Heart right ventricle (tissue), 16 donors: ENCODE measurements at regions of chr16 and their contacts with region 1.

Region 1: DNA sequence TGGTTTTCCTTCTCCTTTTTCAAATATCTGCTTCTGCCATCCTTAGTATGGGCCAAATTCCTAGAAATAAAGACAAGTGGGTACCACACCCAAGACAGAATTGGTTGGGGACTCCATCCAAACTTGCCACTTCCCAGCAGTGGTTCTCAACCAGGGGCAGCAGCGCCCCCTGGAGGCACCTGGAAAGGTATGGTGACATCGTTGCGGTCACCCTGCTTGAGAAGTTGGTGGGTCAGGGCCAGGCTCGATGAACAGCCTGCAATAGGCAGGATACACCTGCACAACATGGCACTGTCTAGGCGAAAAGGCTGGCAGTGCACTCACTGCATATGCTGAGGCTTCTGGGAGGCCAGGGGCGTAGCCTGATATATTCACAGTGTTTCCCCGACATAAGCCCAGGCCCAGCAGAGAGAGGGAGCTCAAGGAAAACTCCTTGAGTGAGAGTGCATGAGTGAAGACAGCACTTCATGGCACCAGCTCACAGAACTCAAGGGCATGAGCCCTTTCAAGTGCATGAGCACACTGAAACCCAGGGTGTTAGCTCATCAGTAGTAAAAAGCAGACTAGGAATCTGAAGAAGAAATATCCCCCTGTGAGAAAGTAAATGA is 57.7 kb downstream of the CMC2 start:
- DNase-seq: peak; percentile 24 to 63
- ATAC-seq: peak in 4 of 8 donors; percentile 43 to 74 (median 60)
- H3K4me3 ChIP-seq: no peak overlapping the region
- H3K27ac ChIP-seq: no peak overlapping the region
- H3K4me1 ChIP-seq: no peaks in the 10 kb centered on the region
- H3K27me3 ChIP-seq: no peaks in the 10 kb centered on the region
- CTCF ChIP-seq: peak; percentile 37 to 71 (median 59)

Region 2: GRCh38 chr16:80883159-80883642 is 65.8 kb before region 1 on chr16:
- intact Hi-C with region 1: no loop called
- DNase-seq: no peak
- ATAC-seq: no peak
- H3K4me3 ChIP-seq: no peak overlapping the region
- H3K27ac ChIP-seq: no peak overlapping the region
- H3K4me1 ChIP-seq: no peaks in the 10 kb centered on the region
- H3K27me3 ChIP-seq: peaks cover 0 to 5% (median 0%) of the 10 kb centered on the region in 7 donors
- CTCF ChIP-seq: no peak

Region 3: DNA sequence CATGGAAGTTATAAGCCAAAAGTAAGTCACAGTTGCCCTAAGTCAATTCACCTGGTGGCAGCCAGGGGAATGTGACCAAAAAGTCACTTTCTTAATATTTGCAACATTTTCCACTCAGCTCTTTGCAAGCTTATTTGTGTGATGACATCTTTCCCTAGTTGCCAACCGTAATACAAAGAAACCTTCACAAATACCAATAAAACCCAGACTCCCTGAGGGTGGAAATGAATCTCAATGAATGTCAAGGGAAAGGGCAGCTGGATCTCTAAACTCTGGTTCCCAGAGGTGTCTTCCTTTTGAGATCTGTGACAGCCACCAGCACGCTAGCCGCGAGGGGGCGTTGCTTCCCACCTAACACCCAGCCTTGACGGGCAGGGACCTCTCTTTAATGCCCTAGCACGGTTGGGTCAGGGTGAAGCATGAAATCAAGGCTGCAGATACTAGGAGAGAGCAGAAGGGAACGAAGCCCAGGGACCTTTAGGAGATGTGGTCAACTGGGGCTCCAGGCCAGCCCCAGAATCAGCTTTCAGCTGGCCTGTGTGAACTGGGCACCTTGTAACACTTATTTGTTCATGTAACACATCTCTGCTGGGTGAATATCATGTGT is 24.5 kb before region 1 on chr16:
- intact Hi-C with region 1: loop called in 2 of 10 experiments (anchors 1 to 2 kb)
- DNase-seq: peak; percentile 32 to 50
- ATAC-seq: peak in 3 of 8 donors; percentile 33 to 70 (median 67)
- H3K4me3 ChIP-seq: no peak overlapping the region
- H3K27ac ChIP-seq: no peak overlapping the region
- H3K4me1 ChIP-seq: no peaks in the 10 kb centered on the region
- H3K27me3 ChIP-seq: no peaks in the 10 kb centered on the region
- CTCF ChIP-seq: peak; percentile 29 to 60 (median 56)